ENCODE measurements at regions of chr14 and their contacts with region 1.

Region 1: DNA sequence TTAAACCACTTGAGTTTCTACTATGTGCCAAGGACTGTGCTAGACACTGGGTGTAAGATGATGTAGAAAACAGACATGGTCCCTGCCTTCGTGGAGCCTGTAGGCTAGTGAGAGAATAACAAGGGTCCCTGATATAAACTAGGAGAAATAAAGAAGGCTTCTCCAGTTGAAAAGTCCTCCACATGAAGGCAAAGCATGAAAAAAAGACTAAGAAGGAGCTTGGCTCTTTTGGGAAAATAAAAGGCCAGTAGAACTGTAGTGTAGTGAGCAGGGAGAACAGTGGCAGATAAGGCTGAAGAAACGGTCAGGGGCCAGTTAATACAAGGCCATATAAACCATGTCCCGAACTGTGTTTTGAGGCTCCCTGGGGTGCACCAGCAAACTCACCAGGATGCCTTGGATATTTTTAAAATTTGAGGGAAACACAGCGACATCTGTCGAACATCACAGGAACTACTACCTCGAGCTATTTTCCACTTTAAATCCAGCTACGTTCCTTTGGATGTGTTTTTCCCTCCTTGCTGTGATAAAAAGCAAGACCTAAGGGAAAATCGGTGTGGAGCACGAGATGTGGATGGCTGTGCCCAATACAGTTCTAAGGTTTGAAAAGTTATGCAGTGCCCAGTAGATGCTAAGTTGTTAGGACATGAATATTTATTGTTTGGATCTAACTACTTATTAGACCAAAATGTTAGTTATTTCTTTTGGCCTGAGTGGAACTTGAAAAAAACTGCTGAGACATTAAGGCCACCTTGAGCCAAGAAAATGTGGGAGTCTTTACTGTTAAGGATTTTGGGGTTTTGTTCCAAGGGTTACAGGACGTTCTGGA is 8.5 kb upstream of the CFL2 start:
- DNase-seq: peak in 4 of 5 donors; percentile 19 to 45 (median 36)
- H3K4me3 ChIP-seq: no peak overlapping the region
- H3K4me3 Mint-ChIP-seq: no peak overlapping the region
- H3K27ac ChIP-seq: no peak overlapping the region
- H3K27ac Mint-ChIP-seq: no peak overlapping the region
- H3K4me1 ChIP-seq: no peaks in the 10 kb centered on the region
- H3K4me1 Mint-ChIP-seq: peaks cover 0 to 7% (median 3%) of the 10 kb centered on the region in 4 donors
- H3K27me3 ChIP-seq: no peaks in the 10 kb centered on the region
- H3K27me3 Mint-ChIP-seq: no peaks in the 10 kb centered on the region

Region 2: DNA sequence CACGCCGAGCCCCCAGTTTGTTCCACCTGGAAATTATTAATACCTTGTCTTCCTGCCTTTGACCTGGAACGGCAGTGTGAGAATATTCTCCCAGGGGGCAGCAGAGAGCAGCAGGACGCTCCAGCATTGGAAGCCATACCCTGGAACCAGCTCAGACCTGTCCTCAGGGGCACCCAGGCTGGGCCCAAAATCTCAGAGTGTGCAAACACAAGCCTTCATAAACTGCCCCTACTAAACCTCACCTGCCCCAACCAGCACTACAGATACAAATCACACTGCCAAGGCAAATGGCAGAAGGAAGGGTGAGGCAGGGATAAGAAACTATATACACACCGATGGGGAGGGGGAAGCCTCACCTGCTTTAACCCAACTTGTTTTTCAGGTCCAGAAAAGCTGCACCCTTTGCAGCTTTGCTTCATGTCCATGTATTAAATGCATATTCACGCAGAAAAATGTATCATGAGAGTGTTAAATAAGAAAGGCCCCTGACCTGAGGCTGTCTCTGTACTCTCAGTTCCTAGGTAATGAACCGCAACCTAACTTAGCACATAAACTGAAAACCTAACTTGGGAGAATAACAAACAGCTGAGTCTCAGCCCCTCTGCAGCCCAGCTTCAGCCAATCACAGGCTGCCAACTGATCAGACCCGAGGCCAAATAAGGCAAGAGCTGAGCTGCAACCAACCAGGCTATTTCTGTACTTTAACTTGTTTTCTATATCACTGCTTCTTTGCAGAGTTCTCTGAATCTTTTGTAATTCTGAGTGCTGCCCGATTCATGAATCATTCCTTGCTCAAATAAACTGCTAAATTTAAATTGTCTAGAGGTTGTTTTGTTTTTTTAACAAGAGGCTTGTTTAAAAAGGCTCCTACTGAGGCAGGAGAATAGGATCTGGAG is 391.0 kb before region 1 on chr14:
- CTCF ChIA-PET with region 1: interaction called, 15 read pairs
- POLR2A ChIA-PET with region 1: no interaction called
- intact Hi-C with region 1: loop called (anchors 1 kb)
- DNase-seq: peak; percentile 34 to 49 (median 43)
- H3K4me3 ChIP-seq: no peak overlapping the region
- H3K4me3 Mint-ChIP-seq: no peak overlapping the region
- H3K27ac ChIP-seq: no peak overlapping the region
- H3K27ac Mint-ChIP-seq: peak overlapping the region in 2 of 7 donors; percentile 2 to 46
- H3K4me1 ChIP-seq: no peaks in the 10 kb centered on the region
- H3K4me1 Mint-ChIP-seq: peaks cover 5 to 14% (median 6%) of the 10 kb centered on the region in 4 donors
- H3K27me3 ChIP-seq: no peaks in the 10 kb centered on the region
- H3K27me3 Mint-ChIP-seq: peaks cover 1 to 3% of the 10 kb centered on the region in 2 donors

Region 3: GRCh38 chr14:34671716-34672115 is 51.2 kb before region 1 on chr14:
- CTCF ChIA-PET with region 1: interaction called, 139 read pairs
- POLR2A ChIA-PET with region 1: interaction called, 4 read pairs
- intact Hi-C with region 1: loop called (anchors 1 kb)
- DNase-seq: no peak
- H3K4me3 ChIP-seq: no peak overlapping the region
- H3K4me3 Mint-ChIP-seq: no peak overlapping the region
- H3K27ac ChIP-seq: no peak overlapping the region
- H3K27ac Mint-ChIP-seq: no peak overlapping the region
- H3K4me1 ChIP-seq: peaks cover 3% of the 10 kb centered on the region
- H3K4me1 Mint-ChIP-seq: peaks cover 0 to 3% (median 0%) of the 10 kb centered on the region in 4 donors
- H3K27me3 ChIP-seq: no peaks in the 10 kb centered on the region
- H3K27me3 Mint-ChIP-seq: no peaks in the 10 kb centered on the region

Region 4: DNA sequence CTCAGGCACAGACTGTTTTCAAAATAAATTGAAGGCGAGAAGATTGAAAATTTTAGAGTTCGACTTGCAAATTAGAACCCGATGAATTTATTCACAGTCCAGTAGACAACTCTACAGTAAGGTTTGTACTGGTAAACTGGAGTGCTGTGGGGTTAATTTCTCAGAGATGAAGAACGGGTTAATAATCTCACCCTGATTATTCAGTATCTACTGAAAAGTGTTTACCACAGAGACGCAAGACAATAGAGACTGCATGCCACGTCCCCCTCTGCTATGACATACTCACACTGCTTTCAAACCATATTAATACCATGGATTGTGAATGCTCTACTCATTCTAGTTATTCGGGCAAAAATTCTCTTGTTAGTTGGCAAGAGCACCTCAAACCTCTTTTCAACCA is 44.6 kb before region 1 on chr14:
- CTCF ChIA-PET with region 1: interaction called, 139 read pairs
- POLR2A ChIA-PET with region 1: interaction called, 3 read pairs
- intact Hi-C with region 1: no loop called
- DNase-seq: no peak
- H3K4me3 ChIP-seq: no peak overlapping the region
- H3K4me3 Mint-ChIP-seq: no peak overlapping the region
- H3K27ac ChIP-seq: no peak overlapping the region
- H3K27ac Mint-ChIP-seq: peak overlapping the region in 1 of 7 donors; percentile 62
- H3K4me1 ChIP-seq: peaks cover 6% of the 10 kb centered on the region
- H3K4me1 Mint-ChIP-seq: peaks cover 0 to 3% (median 0%) of the 10 kb centered on the region in 4 donors
- H3K27me3 ChIP-seq: no peaks in the 10 kb centered on the region
- H3K27me3 Mint-ChIP-seq: no peaks in the 10 kb centered on the region

Region 5: GRCh38 chr14:34707722-34708121 is 15.2 kb before region 1 on chr14:
- CTCF ChIA-PET with region 1: interaction called, 19 read pairs
- POLR2A ChIA-PET with region 1: interaction called, 4 read pairs
- intact Hi-C with region 1: no loop called
- DNase-seq: no peak
- H3K4me3 ChIP-seq: no peak overlapping the region
- H3K4me3 Mint-ChIP-seq: no peak overlapping the region
- H3K27ac ChIP-seq: no peak overlapping the region
- H3K27ac Mint-ChIP-seq: peak overlapping the region in 1 of 7 donors; percentile 13
- H3K4me1 ChIP-seq: peaks cover 7% of the 10 kb centered on the region
- H3K4me1 Mint-ChIP-seq: peaks cover 0 to 6% (median 5%) of the 10 kb centered on the region in 4 donors
- H3K27me3 ChIP-seq: no peaks in the 10 kb centered on the region
- H3K27me3 Mint-ChIP-seq: no peaks in the 10 kb centered on the region

Region 6: GRCh38 chr14:34733235-34733634 is 10.3 kb after region 1 on chr14:
- CTCF ChIA-PET with region 1: interaction called, 24 read pairs
- POLR2A ChIA-PET with region 1: no interaction called
- intact Hi-C with region 1: no loop called
- DNase-seq: no peak
- H3K4me3 ChIP-seq: no peak overlapping the region
- H3K4me3 Mint-ChIP-seq: no peak overlapping the region
- H3K27ac ChIP-seq: no peak overlapping the region
- H3K27ac Mint-ChIP-seq: no peak overlapping the region
- H3K4me1 ChIP-seq: no peaks in the 10 kb centered on the region
- H3K4me1 Mint-ChIP-seq: no peaks in the 10 kb centered on the region
- H3K27me3 ChIP-seq: no peaks in the 10 kb centered on the region
- H3K27me3 Mint-ChIP-seq: peaks cover 2 to 4% of the 10 kb centered on the region in 2 donors